ENCODE measurements at regions of chr5 and their contacts with region 1.

Region 1: DNA sequence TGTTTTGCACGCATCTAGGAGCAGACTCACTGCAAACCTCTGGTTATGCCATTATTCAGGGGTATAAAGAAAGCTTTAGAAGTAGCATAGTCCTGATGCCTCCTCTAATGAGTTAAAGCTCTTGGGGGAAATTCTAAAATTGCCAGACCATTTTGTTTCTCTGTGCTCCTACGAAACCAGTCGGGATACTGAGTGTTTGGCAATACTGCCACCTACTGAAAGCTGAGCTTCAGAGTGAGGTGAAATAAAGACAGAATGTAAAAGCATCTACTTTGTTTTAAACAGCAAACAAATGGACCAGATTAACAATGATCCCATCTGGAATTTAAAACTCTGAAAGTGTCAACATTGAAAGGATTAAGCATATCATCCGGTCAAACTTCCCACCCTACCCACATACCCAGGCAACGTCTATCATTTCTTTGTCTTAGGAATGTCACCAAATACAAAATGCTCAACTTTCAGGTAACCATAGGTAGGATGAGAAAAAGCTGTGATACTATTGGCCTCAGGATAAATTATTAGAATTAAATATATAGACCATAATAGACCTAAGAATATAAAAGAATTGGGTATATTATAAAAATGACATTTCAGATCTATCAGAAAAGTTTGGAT is 77.8 kb upstream of the SHISAL2B start:
- DNase-seq: no peak

Region 2: GRCh38 chr5:64074533-64074932 is 537.9 kb before region 1 on chr5:
- intact Hi-C with region 1: loop called (anchors 5 kb)
- DNase-seq: no peak

Region 3: DNA sequence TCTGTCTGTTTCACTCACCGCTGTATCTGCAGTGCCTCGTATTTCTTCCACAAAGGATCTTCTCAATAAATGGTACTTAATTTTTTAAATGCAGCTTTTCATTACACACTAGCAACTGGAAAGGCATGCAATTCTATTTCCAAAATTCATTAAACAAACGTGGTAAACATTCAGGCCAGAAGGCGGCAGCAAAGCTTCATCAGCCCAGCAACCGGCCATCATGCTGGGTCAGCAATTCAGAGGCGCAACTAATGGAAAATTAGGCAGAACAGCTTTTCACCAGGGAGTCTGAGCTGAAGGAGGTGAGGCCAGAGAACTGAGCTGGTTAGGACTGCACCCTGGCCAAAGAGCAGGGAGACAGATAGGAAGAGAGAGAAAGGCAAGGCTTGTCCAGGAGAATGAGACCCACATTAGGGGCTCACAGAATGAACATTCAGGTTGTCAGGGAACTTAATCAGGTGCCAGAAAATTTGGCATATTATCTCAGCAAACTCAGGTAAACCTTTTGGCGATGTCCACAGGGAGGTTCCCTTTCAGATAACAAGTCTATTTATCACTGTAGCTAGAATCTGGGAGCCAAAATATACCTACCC is 464.5 kb before region 1 on chr5:
- intact Hi-C with region 1: loop called (anchors 2 kb)
- DNase-seq: no peak

Region 4: DNA sequence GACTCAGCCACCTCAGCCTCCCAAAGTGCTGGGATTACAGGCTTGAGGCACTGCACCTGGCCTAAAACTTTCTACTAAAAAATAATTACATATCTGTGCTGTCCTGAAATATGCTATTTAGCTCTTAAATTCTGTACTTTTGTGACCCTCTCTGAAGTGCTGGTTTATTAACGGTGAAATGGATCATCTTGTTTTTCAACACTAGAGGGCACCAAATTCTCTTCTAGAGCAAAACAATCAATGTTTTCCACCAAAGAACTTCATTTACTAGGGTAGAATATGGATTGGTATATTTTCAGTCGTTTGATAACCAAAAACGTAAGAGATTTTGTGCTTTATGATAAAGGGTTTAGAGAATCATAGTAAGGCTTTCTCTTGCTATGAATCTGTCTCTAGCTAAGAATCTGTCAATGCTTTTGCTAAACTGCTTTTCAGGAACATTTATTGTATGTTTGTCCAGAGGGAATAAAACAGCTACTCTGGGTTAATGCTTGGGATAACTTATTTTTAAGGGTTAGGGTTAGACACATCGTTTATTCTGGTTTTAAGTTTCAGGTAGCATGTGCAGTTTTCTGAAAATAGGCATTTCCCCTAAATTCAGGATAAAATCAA is 383.2 kb before region 1 on chr5:
- intact Hi-C with region 1: loop called (anchors 2 kb)
- DNase-seq: no peak

Region 5: GRCh38 chr5:64505769-64506566 is 106.5 kb before region 1 on chr5 and contains the start of gene RGS7BP:
- intact Hi-C with region 1: loop called (anchors 5 kb)
- DNase-seq: peak; percentile 78
- total RNA-seq, gene RGS7BP: 1.7 TPM

Region 6: GRCh38 chr5:64759960-64760660 is 147.7 kb after region 1 on chr5:
- intact Hi-C with region 1: no loop called
- DNase-seq: no peak

Measured in cardiac septum (tissue), 1 donor.